ENCODE measurements at regions of chr11 and their contacts with region 1.

Region 1: DNA sequence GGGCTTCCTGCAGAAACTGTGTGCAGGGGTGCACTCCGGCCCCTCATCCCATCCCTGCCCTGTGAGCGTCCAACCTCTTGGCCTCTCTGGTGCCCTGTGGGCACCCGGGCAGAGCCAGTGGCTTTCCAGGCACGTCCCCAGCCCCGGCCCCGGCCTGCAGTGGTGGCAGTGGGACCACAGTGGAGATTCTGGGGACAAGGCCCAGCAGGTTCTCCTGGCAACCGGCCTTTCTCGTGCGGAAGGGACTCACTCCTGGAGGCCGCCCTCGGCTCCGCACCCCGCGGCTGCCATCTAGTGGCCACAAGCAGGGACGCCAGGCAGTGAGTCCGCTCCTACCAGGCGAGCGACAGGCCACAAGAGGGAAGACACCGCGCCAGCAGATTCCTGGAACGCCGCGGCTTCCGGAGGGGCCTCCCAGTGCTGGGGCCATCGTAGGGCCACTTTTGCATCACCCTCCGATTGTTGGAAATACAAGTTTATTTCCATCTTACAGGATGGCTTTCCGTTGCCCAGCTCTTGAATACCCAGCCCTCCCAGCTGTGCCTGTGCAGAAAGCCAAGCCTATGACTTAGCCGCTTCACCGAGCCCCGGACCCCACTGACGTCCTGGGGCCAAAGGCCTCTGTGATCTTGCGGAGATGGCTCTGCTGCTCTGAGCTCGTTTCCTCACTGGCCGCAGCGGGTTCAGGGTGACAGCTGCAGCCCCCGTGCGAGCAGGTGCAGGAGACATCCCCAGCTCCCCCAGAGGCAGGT is 357.3 kb downstream of the CTTN start:
- DNase-seq: peak; percentile 93

Region 2: DNA sequence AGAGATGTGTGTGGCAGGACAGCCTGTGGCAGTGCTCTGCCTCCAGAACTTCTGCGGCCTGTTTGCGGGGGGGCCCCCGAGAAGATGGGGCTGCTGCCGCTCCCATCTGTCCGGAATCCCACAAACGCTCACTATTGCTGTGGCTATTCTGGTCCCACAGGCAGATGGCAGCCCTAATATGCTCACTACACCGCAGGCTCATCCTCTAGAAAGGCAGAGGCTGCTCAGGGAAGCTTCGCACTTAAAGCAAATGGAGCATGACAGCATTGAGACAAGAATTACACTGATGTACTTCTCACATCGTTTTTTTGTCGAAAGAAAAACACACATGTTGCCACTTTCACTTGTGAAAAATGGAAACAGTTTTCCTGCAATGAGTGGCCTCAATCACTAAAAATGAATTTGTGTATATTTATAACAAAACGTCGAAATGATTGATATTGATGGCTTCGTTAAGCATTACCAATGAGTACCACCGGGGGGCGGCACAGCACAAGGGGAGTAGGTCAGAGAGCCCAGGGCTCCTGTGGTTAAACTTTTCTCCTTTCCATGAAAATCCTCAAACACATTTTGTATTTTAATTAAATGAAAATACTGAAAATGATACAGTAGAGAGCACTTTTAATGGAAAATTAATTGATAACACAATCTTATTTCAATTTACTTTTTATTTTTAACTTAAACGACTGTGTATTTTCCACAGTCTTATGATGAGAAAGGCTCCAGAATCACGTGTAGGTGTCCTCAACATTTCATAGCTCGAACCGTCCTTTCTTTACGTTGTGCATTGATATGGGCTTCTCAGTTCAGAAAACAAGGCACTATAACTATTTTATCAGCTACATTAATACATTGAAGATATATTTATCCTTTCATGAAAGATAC is 288.1 kb before region 1 on chr11:
- intact Hi-C with region 1: loop called in 1 of 2 experiments (anchors 5 kb)
- DNase-seq: peak; percentile 82

Region 3: DNA sequence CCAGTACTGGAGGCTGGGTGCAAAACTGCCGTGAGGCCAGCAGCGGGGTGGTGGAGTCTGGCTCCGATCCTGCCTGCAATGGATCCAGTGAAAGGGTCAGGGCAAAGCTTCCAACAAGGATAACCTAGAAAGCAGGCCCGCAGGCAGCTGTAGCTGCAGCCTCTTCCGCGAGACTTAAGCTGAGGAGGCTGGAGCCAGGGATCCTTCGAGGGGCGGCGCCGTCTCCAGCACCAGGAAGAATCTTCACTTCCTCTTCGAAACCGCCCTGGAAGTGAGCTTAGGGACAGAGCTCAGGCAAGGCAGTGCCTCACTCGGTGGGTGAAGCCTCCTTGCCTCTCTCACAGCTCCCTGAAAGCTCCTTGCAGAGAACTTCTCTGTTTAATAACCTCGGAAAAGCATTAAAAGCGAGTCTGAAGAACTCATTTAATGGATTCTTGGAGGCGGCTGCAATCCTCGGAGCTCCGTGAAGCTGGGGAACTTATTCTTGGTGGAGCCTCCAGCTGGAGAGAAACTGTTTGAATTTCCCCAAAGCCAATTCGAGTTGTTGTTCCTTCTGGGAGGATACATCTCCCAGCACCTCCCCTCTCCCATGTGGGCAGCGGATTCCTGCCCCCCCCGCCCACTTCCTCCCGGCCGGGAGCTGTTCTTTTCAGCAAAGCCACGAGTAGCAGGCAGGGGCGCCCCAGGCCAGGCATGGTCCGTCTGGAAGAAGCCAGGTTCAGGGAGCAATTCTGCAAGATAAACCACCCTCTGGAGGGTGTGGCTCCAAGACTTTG is 187.4 kb before region 1 on chr11:
- intact Hi-C with region 1: no loop called
- DNase-seq: peak; percentile 86

Region 4: DNA sequence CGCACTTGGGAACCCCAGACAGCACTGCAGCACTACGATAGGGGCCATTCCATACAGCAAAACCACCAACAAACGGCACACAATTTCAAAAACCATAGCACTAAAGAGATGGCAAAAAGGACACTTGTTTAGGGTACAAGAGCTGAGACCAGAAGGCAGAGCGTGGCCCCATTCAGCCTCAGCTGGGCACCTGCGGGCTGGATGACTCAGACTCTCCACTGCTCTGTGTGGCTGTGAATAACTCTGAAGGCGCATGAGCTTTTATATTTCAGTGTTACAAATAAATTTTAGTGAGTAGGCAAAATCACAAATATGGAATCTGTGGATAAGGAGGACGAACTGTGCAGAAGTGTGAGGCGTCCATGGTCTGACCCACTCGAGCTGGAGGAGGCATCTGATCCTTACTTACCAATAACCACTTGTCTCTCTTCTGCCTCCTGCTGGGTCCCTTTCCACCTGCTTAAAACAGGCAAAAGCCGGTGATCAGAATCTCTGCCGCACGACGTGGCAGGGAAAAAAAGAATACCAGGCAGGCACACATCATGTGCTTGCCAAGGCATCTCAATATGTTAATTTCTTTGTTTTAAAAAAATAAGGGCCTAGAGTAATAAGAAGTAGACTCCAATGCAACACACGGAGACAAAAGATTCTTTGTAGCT is 171.1 kb after region 1 on chr11:
- intact Hi-C with region 1: no loop called
- DNase-seq: no peak

Measured in posterior vena cava (tissue), 2 donors.